CD8-positive, alpha-beta T cell (primary cell): ENCODE measurements at regions of chr2 and their contacts with region 1.

Region 1: GRCh38 chr2:149334156-149334555 is 3.8 kb downstream of the LYPD6 start:
- DNase-seq: no peak
- ATAC-seq: no peak
- H3K4me3 ChIP-seq: no peak overlapping the region
- H3K4me3 Mint-ChIP-seq: no peak overlapping the region
- H3K27ac ChIP-seq: no peak overlapping the region
- H3K27ac Mint-ChIP-seq: no peak overlapping the region
- H3K4me1 ChIP-seq: no peaks in the 10 kb centered on the region
- H3K4me1 Mint-ChIP-seq: peaks cover 5% of the 10 kb centered on the region
- H3K27me3 ChIP-seq: peaks cover 5 to 8% of the 10 kb centered on the region in 2 experiments
- H3K27me3 Mint-ChIP-seq: peaks cover 33% of the 10 kb centered on the region
- CTCF ChIP-seq: no peak

Region 2: GRCh38 chr2:149225446-149225845 is 108.7 kb before region 1 on chr2:
- CTCF ChIA-PET with region 1: no interaction called
- POLR2A ChIA-PET with region 1: no interaction called
- intact Hi-C with region 1: no loop called
- DNase-seq: no peak
- ATAC-seq: no peak
- H3K4me3 ChIP-seq: no peak overlapping the region
- H3K4me3 Mint-ChIP-seq: no peak overlapping the region
- H3K27ac ChIP-seq: no peak overlapping the region
- H3K27ac Mint-ChIP-seq: no peak overlapping the region
- H3K4me1 ChIP-seq: no peaks in the 10 kb centered on the region
- H3K4me1 Mint-ChIP-seq: no peaks in the 10 kb centered on the region
- H3K27me3 ChIP-seq: peaks cover 0 to 3% of the 10 kb centered on the region in 2 experiments
- H3K27me3 Mint-ChIP-seq: peaks cover 24% of the 10 kb centered on the region
- CTCF ChIP-seq: no peak

Region 3: GRCh38 chr2:149346272-149346671 is 12.1 kb after region 1 on chr2:
- CTCF ChIA-PET with region 1: no interaction called
- POLR2A ChIA-PET with region 1: no interaction called
- intact Hi-C with region 1: loop called in 1 of 2 experiments (anchors 1 kb)
- DNase-seq: no peak
- ATAC-seq: no peak
- H3K4me3 ChIP-seq: no peak overlapping the region
- H3K4me3 Mint-ChIP-seq: no peak overlapping the region
- H3K27ac ChIP-seq: no peak overlapping the region
- H3K27ac Mint-ChIP-seq: no peak overlapping the region
- H3K4me1 ChIP-seq: no peaks in the 10 kb centered on the region
- H3K4me1 Mint-ChIP-seq: no peaks in the 10 kb centered on the region
- H3K27me3 ChIP-seq: peaks cover 0 to 4% of the 10 kb centered on the region in 2 experiments
- H3K27me3 Mint-ChIP-seq: peaks cover 12% of the 10 kb centered on the region
- CTCF ChIP-seq: no peak